ENCODE measurements at regions of chr16 and their contacts with region 1.

Region 1: GRCh38 chr16:54171626-54172525 is 114.7 kb downstream of the IRX3 start:
- DNase-seq: peak; percentile 46
- ATAC-seq: no peak
- H3K4me3 ChIP-seq: peak overlapping the region in 1 of 3 experiments; percentile 49; a peak in 2 of 6 replicates
- H3K27ac ChIP-seq: peak overlapping the region; percentile 65
- H3K4me1 ChIP-seq: peaks cover 77% of the 10 kb centered on the region
- H3K27me3 ChIP-seq: no peaks in the 10 kb centered on the region
- CTCF ChIP-seq: no peak
- EP300 ChIP-seq: 0 out of 4 replicates have a peak, but pooled peaks of 1 of the 2 experiments have one; percentile 18
- POLR2A ChIP-seq: peak in 1 of 2 experiments; percentile 44; a peak in 1 of 4 replicates
- RAD21 ChIP-seq: no peak

Region 2: DNA sequence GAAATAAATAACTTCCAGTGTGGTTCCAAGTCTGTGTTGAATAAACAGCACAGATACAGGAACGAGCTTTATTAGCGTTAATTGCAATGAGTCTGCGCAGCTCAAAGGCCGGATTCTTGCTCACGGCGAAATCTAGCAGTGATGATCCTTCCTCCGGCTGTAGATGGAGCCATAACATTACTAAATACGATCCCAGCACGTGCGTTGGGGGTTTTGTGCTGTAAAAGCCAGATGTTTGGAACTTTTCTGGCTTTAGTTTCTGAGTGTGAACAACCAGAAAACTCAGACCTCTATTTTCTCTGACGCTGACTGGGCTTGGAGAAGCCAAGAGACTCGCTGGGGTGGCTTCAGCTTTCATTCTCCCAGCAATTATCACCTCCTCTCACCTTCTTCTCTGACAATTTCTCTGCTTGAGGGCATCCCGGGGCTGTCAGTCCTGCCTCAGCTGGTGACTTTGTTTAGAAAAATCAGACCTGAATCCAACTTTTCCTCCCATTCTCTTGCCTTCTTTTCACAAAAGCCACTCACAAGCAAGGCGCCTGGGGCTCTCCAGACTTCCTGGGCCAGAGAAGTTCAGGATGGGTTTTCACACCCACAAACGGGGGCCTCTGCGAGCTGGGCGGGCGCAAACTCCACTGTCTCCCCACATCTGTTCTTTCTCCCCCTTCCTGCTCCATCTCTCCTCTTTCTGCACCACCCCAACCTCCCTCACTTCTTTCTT is 621.7 kb before region 1 on chr16:
- CTCF ChIA-PET with region 1: no interaction called
- POLR2A ChIA-PET with region 1: no interaction called
- in situ Hi-C with region 1: no loop called
- intact Hi-C with region 1: loop called (anchors 10 kb)
- DNase-seq: peak; percentile 69
- ATAC-seq: peak; percentile 83
- H3K4me3 ChIP-seq: no peak overlapping the region
- H3K27ac ChIP-seq: no peak overlapping the region
- H3K4me1 ChIP-seq: peaks cover 26% of the 10 kb centered on the region
- H3K27me3 ChIP-seq: peaks cover 0 to 25% of the 10 kb centered on the region in 2 experiments
- CTCF ChIP-seq: peak; percentile 95
- EP300 ChIP-seq: no peak
- POLR2A ChIP-seq: no peak
- RAD21 ChIP-seq: peak; percentile 87

Region 3: DNA sequence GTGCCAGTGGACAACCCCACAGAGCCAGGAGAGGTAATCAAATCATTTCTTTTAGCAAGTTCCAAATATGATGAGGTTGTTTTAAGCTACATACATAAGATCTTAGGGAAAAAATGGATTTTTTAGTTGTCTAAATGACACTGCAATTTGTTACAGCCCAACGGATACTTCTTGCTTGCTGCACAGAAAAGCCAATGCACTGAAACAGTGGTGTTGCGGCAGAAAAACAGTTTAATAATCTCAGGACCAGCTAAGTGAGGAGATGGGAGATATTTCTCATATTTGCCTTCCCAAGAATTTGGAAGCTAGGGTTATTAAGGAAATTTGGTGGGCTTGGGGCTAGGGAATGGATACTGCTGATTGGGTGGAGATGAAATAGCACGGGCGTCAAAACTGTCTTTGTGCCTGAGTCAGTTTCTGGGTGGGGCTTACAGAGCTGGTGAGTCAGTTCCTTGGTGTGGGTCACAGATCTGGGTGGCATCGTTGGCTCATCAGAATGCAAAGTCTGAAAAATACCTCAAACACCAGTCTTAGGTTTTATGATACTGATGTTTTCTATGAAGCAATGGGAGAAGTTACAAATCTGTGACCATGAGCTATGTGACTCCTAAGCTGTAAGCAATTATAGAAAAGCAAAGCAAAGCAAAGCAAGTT is 140.6 kb before region 1 on chr16:
- CTCF ChIA-PET with region 1: no interaction called
- POLR2A ChIA-PET with region 1: no interaction called
- in situ Hi-C with region 1: no loop called
- intact Hi-C with region 1: no loop called
- DNase-seq: no peak
- ATAC-seq: no peak
- H3K4me3 ChIP-seq: no peak overlapping the region
- H3K27ac ChIP-seq: no peak overlapping the region
- H3K4me1 ChIP-seq: no peaks in the 10 kb centered on the region
- H3K27me3 ChIP-seq: no peaks in the 10 kb centered on the region
- CTCF ChIP-seq: no peak
- EP300 ChIP-seq: no peak
- POLR2A ChIP-seq: no peak
- RAD21 ChIP-seq: no peak

Region 4: GRCh38 chr16:54062361-54063278 is 109.3 kb before region 1 on chr16:
- CTCF ChIA-PET with region 1: no interaction called
- POLR2A ChIA-PET with region 1: no interaction called
- in situ Hi-C with region 1: no loop called
- intact Hi-C with region 1: loop called (anchors 10 kb)
- DNase-seq: no peak
- ATAC-seq: peak; percentile 59
- H3K4me3 ChIP-seq: no peak overlapping the region
- H3K27ac ChIP-seq: no peak overlapping the region
- H3K4me1 ChIP-seq: peaks cover 55% of the 10 kb centered on the region
- H3K27me3 ChIP-seq: no peaks in the 10 kb centered on the region
- CTCF ChIP-seq: peak; percentile 48; the same call in 1 of the 2 replicates
- EP300 ChIP-seq: no peak
- POLR2A ChIP-seq: no peak
- RAD21 ChIP-seq: peak; percentile 26; the same call in 1 of the 2 replicates

Region 5: GRCh38 chr16:54123766-54124165 is 48.1 kb before region 1 on chr16:
- CTCF ChIA-PET with region 1: no interaction called
- POLR2A ChIA-PET with region 1: interaction called, 3 read pairs
- in situ Hi-C with region 1: no loop called
- intact Hi-C with region 1: loop called (anchors 1 kb)
- DNase-seq: no peak
- ATAC-seq: no peak
- H3K4me3 ChIP-seq: no peak overlapping the region
- H3K27ac ChIP-seq: no peak overlapping the region
- H3K4me1 ChIP-seq: peaks cover 53% of the 10 kb centered on the region
- H3K27me3 ChIP-seq: no peaks in the 10 kb centered on the region
- CTCF ChIP-seq: no peak
- EP300 ChIP-seq: no peak
- POLR2A ChIP-seq: no peak
- RAD21 ChIP-seq: no peak

Region 6: GRCh38 chr16:54286090-54286993 is 114.5 kb after region 1 on chr16 and contains the start of gene IRX3:
- CTCF ChIA-PET with region 1: no interaction called
- POLR2A ChIA-PET with region 1: interaction called, 16 read pairs
- in situ Hi-C with region 1: no loop called
- intact Hi-C with region 1: loop called (anchors 2 kb)
- DNase-seq: peak; percentile 91
- ATAC-seq: peak; percentile 74
- H3K4me3 ChIP-seq: peak within 1 kb of the TSS; percentile 87 to 98 (median 88)
- H3K27ac ChIP-seq: peak within 1 kb of the TSS; percentile 91
- H3K4me1 ChIP-seq: peaks cover 16% of the 10 kb centered on the region
- H3K27me3 ChIP-seq: no peaks in the 10 kb centered on the region
- CTCF ChIP-seq: peak; percentile 26; the same call in 1 of the 2 replicates
- EP300 ChIP-seq: no peak
- POLR2A ChIP-seq: peak; percentile 65 to 67
- RAD21 ChIP-seq: no peak; the same call in 1 of the 2 replicates
- total RNA-seq, gene IRX3: 10.0 and 16.4 TPM in 2 replicates

Measured in HepG2 (cell line).